ENCODE measurements at regions of chr11 and their contacts with region 1.

Region 1: GRCh38 chr11:77091146-77091940 is 11.3 kb upstream of the OMP start:
- DNase-seq: peak; percentile 61
- ATAC-seq: peak; percentile 98
- H3K4me3 Mint-ChIP-seq: no peak overlapping the region
- H3K27ac Mint-ChIP-seq: no peak overlapping the region
- H3K4me1 Mint-ChIP-seq: no peaks in the 10 kb centered on the region
- H3K27me3 Mint-ChIP-seq: no peaks in the 10 kb centered on the region
- CTCF ChIP-seq: peak; percentile 39

Region 2: DNA sequence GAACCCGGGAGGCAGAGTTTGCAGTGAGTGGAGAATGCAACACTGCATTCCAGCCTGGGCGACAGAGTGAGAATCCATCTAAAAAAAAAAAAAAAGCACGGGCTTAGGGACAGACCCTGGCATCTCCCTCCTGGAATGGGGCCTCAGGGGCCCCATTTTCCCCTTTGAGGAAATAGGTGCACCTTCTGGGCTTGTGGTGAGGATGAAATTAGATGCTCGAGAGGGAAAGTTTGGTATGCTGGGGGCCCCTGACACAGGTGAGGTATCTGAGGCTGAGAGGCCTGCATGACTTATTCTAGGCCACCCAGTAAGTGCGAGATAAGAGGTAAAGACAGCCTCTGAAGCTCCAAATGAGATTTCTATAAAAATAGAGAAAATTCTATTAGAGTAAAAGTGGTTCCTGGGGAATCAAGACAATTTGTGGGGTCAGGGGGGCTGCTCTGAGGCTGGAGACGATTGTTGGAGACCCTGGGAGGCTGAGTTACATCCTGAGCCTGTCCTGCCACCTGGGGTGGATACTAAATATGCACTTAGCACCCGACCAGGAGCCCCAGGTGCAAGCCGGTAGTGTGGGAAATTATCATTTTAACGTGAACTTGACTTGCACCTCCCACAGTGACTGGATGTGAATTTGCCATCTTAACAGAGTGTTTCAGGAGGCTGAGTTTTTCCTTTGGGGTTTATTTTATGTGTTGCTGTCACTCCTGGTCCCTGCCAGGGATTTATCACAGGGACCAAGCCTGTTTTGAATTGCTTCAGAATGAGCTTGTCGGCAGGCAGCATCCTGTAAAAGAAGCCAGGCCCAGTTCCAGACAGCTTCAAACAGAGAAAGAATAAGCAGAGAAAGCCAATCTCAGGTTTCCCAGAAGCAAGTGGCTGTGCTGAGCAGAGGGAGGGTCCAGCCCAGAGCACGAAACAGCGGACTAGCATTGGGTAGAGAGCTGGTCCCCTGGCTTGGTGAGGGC is 356.6 kb before region 1 on chr11:
- CTCF ChIA-PET with region 1: interaction called, 11 read pairs
- POLR2A ChIA-PET with region 1: no interaction called
- intact Hi-C with region 1: loop called (anchors 1 kb)
- DNase-seq: no peak
- ATAC-seq: no peak
- H3K4me3 Mint-ChIP-seq: no peak overlapping the region
- H3K27ac Mint-ChIP-seq: no peak overlapping the region
- H3K4me1 Mint-ChIP-seq: no peaks in the 10 kb centered on the region
- H3K27me3 Mint-ChIP-seq: peaks cover 5% of the 10 kb centered on the region
- CTCF ChIP-seq: no peak

Region 3: DNA sequence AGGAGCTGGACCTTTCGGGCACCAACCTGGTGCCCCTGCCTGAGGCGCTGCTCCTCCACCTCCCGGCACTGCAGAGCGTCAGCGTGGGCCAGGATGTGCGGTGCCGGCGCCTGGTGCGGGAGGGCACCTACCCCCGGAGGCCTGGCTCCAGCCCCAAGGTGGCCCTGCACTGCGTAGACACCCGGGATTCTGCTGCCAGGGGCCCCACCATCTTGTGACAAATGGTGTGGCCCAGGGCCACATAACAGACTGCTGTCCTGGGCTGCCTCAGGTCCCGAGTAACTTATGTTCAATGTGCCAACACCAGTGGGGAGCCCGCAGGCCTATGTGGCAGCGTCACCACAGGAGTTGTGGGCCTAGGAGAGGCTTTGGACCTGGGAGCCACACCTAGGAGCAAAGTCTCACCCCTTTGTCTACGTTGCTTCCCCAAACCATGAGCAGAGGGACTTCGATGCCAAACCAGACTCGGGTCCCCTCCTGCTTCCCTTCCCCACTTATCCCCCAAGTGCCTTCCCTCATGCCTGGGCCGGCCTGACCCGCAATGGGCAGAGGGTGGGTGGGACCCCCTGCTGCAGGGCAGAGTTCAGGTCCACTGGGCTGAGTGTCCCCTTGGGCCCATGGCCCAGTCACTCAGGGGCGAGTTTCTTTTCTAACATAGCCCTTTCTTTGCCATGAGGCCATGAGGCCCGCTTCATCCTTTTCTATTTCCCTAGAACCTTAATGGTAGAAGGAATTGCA is 294.7 kb before region 1 on chr11:
- CTCF ChIA-PET with region 1: no interaction called
- POLR2A ChIA-PET with region 1: no interaction called
- intact Hi-C with region 1: no loop called
- DNase-seq: no peak
- ATAC-seq: no peak
- H3K4me3 Mint-ChIP-seq: no peak overlapping the region
- H3K27ac Mint-ChIP-seq: no peak overlapping the region
- H3K4me1 Mint-ChIP-seq: peaks cover 8% of the 10 kb centered on the region
- H3K27me3 Mint-ChIP-seq: no peaks in the 10 kb centered on the region
- CTCF ChIP-seq: no peak

Region 4: GRCh38 chr11:76807206-76807875 is 284.0 kb before region 1 on chr11:
- CTCF ChIA-PET with region 1: interaction called, 7 read pairs
- POLR2A ChIA-PET with region 1: no interaction called
- intact Hi-C with region 1: loop called (anchors 1 kb)
- DNase-seq: peak; percentile 52
- ATAC-seq: peak; percentile 65
- H3K4me3 Mint-ChIP-seq: no peak overlapping the region
- H3K27ac Mint-ChIP-seq: no peak overlapping the region
- H3K4me1 Mint-ChIP-seq: peaks cover 7% of the 10 kb centered on the region
- H3K27me3 Mint-ChIP-seq: peaks cover 54% of the 10 kb centered on the region
- CTCF ChIP-seq: peak; percentile 74

Region 5: DNA sequence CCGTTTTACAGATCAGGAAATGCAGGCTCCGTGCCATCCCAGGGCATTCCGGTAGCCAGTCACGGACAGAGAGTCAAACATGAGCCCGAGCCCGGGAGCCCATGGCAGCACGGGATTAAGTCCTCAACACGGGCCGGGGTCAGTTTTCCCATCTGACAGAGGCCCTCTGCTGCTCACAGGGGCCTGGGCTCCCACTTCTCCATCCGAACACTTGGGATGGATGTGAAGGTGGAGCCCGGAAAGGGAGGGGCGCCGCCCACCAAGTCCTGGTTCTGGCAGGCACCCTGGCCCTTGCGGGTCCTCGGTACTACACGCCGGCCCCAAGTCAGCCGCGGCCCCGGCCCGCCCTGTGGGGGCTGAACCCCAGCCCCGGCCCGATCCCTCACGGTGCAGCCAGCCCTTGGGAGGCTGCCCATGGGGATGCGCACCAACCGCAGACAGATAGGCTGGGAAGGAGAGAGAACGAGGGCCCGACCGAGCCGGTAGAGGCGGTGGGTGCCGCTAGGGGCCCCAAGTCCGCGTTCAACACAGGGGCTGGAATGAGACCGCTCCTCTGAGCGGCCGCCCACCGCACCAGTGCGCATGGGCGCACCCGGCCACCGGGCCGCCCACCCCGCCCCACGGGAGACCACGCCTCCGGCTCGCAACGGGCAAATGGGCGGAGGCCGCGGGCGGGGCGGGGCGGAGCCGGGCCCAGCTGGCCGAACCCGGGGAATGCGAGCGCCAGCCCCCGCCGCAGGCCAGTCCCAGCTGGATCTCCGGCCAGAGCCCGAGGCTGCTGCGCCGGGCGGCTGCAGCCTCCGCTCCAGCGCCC is 24.9 kb before region 1 on chr11 and contains the start of gene CAPN5:
- CTCF ChIA-PET with region 1: interaction called, 9 read pairs
- POLR2A ChIA-PET with region 1: no interaction called
- intact Hi-C with region 1: loop called (anchors 1 kb)
- DNase-seq: peak; percentile 93
- ATAC-seq: peak; percentile 95
- H3K4me3 Mint-ChIP-seq: peak within 1 kb of the TSS; percentile 85
- H3K27ac Mint-ChIP-seq: peak within 1 kb of the TSS; percentile 54
- H3K4me1 Mint-ChIP-seq: peaks cover 10% of the 10 kb centered on the region
- H3K27me3 Mint-ChIP-seq: no peaks in the 10 kb centered on the region
- CTCF ChIP-seq: no peak
- total RNA-seq, gene CAPN5: 0.44 and 0.71 TPM in 2 replicates

Region 6: DNA sequence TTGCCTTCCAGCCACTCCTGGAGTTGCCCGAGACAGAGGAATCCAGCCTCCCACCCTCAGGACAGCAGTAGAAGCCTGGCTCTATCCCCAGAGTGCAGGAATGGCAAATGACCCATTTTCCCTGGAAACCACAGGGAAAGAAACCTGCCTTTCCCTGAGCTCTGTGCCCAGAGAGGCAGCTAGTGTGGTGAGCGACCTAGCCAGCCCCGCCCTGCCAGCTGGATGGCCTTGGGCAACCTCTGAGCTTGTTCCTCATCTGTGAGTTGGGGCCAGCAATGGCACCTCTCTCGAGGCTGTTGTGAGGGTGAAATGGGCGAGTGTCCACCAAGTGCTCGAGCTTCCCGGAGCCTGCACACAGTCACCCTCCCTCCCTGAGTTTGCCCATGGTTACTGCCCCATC is 15.0 kb after region 1 on chr11:
- CTCF ChIA-PET with region 1: interaction called, 16 read pairs
- POLR2A ChIA-PET with region 1: no interaction called
- intact Hi-C with region 1: no loop called
- DNase-seq: no peak
- ATAC-seq: no peak
- H3K4me3 Mint-ChIP-seq: no peak overlapping the region
- H3K27ac Mint-ChIP-seq: no peak overlapping the region
- H3K4me1 Mint-ChIP-seq: peaks cover 1% of the 10 kb centered on the region
- H3K27me3 Mint-ChIP-seq: peaks cover 6% of the 10 kb centered on the region
- CTCF ChIP-seq: no peak

Region 7: GRCh38 chr11:77381729-77382685 is 290.7 kb after region 1 on chr11:
- CTCF ChIA-PET with region 1: no interaction called
- POLR2A ChIA-PET with region 1: no interaction called
- intact Hi-C with region 1: no loop called
- DNase-seq: no peak
- ATAC-seq: no peak
- H3K4me3 Mint-ChIP-seq: no peak overlapping the region
- H3K27ac Mint-ChIP-seq: no peak overlapping the region
- H3K4me1 Mint-ChIP-seq: no peaks in the 10 kb centered on the region
- H3K27me3 Mint-ChIP-seq: no peaks in the 10 kb centered on the region
- CTCF ChIP-seq: no peak

Measured in activated B cell treated with CpG ODN at 0.5 μM for 24 hours (primary cell).